ENCODE measurements at regions of chr1 and their contacts with region 1.

Region 1: DNA sequence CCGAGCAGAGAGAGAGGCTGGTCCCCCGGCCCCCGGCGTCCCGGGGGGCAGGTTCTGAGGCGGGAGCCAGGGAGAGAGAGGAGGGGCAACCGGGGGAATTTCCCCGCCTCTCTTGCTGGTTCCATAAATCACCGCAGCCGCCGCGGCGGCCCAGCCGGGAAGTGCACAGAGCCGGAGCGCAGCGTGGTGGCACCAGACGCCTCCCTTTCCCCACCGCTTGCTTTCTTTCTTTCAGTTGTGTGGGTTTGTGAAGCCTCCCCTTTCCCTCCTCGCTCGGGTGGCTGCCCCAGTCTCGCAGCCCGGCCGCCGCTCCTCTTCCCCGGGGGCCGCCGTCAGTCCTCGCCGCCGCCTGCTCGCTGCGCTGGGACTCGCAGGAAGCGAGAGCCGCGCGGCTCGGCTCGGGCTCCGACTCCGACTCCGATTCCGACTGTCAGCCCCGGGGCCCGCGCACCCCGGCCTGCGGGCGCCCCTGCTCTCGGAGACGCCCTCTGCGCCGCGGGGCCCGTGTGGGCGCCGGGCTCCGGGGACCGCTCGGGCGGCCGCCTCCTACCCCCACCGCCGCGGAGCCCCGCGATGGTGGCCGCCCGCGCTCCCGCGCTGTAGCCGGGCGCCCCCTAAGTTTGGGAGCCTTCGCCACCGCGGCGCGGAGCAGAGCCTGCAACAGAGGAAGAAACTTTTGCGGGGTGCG is at the start of gene CACHD1:
- DNase-seq: peak in 1 of 2 experiments; percentile 73
- H3K4me3 ChIP-seq: peak within 1 kb of the TSS; percentile 86
- H3K27ac ChIP-seq: no peak within 1 kb of the TSS
- H3K4me1 ChIP-seq: peaks cover 18% of the 10 kb centered on the region
- H3K27me3 ChIP-seq: no peaks in the 10 kb centered on the region; the same call in 1 of the 2 replicates
- CTCF ChIP-seq: no peak
- total RNA-seq, gene CACHD1: 3.1 and 3.8 TPM in 2 replicates

Region 2: GRCh38 chr1:64553281-64553680 is 83.2 kb after region 1 on chr1:
- CTCF ChIA-PET with region 1: no interaction called
- POLR2A ChIA-PET with region 1: no interaction called
- intact Hi-C with region 1: loop called (anchors 10 kb)
- DNase-seq: no peak
- H3K4me3 ChIP-seq: no peak overlapping the region
- H3K27ac ChIP-seq: no peak overlapping the region
- H3K4me1 ChIP-seq: no peaks in the 10 kb centered on the region
- H3K27me3 ChIP-seq: no peaks in the 10 kb centered on the region
- CTCF ChIP-seq: no peak

Region 3: DNA sequence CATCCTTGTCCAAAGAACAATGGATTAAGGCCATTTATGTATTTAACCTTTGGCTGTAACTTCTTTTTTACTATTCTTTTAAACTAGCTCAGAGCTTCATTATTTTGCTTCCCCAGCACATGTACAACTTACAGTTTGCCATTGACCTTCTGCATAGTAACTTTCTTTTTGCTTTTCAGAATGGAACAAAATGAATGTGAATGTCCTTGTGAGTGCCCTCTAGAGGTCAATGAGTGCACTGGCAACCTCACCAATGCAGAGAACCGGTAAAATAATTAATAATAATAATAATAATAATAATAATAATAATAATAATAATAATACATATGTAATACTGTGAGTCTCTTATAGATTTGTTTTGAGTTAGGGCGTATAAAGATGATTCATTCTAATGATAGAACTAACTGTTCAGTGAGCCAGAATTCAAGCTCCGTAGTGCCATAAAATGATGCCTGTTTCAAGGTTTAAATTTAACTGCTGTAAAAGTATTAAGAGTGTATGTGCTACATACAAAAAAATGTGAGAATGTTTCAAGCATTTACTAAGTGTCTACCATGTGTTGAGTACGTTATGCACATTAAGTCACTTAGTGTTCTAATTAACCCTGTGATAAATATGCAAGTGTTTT is 205.7 kb after region 1 on chr1:
- CTCF ChIA-PET with region 1: no interaction called
- POLR2A ChIA-PET with region 1: no interaction called
- intact Hi-C with region 1: loop called (anchors 5 kb)
- DNase-seq: no peak
- H3K4me3 ChIP-seq: no peak overlapping the region
- H3K27ac ChIP-seq: no peak overlapping the region
- H3K4me1 ChIP-seq: no peaks in the 10 kb centered on the region
- H3K27me3 ChIP-seq: no peaks in the 10 kb centered on the region
- CTCF ChIP-seq: peak; percentile 65

Measured in PC-9 (cell line).